A549 (cell line): ENCODE measurements at regions of chr5 and their contacts with region 1.

Region 1: DNA sequence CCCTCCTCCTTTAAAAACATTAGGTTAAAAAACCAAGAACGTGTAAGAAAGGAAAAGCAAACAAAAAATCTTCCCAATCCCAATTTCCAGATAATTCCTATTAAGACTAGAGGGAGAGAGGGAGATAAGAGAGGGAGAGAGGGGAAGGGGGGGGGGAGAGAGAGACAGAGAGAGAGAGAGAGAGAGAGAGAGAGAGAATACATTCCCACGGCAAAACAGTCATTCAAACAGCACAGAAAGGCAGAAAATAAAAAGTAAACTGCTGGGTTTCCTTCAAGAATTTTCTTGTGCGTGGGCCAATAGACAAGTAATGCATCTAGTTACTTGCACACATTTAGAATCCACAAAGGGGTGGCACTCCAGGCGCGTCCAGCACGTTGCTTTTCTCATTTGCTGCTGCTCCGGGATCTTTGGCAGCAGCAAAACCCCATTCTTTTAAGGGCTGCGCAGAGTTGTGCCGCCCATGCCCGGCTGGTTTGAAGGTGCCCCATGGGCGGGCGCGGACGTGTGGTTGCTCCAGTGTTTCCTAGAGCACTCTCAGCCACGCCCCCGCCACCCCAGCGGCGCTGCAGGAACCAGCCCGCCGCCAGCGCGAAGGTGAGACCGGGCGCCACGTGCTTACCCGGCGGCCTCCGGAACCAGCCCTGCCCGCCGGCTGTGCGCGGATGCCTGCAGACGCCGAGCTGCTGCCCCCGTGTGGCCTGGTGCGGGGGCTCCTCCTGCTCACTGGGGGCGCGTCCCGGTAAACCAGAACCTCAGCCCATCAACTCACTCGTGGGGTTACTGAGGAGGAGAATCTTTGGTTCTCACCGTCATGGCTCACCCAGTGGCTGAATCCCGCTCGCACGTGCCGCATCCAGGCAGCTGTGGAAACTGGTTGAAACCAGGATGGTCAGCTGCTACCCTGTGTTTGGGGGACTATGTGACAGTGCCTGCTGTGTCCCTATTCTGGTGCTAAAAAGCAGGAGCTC is 44.6 kb downstream of the STC2 start:
- DNase-seq: peak; percentile 80 to 82
- ATAC-seq: peak; percentile 94 to 98
- H3K4me3 ChIP-seq: peak overlapping the region; percentile 34
- H3K27ac ChIP-seq: peak overlapping the region; percentile 69 to 79
- H3K4me1 ChIP-seq: peaks cover 4% of the 10 kb centered on the region; the same call in 1 of the 3 replicates
- CTCF ChIP-seq: peak; percentile 78
- EP300 ChIP-seq: no peak
- POLR2A ChIP-seq: no peak
- RAD21 ChIP-seq: peak; percentile 69 to 82

Region 2: GRCh38 chr5:173163219-173163618 is 120.4 kb before region 1 on chr5:
- CTCF ChIA-PET with region 1: interaction called, 18 read pairs
- POLR2A ChIA-PET with region 1: no interaction called
- DNase-seq: no peak
- ATAC-seq: peak; percentile 40 to 43; a peak in 2 of 6 replicates
- H3K4me3 ChIP-seq: no peak overlapping the region
- H3K27ac ChIP-seq: no peak overlapping the region
- H3K4me1 ChIP-seq: no peaks in the 10 kb centered on the region
- CTCF ChIP-seq: no peak
- EP300 ChIP-seq: no peak
- POLR2A ChIP-seq: no peak
- RAD21 ChIP-seq: no peak

Region 3: DNA sequence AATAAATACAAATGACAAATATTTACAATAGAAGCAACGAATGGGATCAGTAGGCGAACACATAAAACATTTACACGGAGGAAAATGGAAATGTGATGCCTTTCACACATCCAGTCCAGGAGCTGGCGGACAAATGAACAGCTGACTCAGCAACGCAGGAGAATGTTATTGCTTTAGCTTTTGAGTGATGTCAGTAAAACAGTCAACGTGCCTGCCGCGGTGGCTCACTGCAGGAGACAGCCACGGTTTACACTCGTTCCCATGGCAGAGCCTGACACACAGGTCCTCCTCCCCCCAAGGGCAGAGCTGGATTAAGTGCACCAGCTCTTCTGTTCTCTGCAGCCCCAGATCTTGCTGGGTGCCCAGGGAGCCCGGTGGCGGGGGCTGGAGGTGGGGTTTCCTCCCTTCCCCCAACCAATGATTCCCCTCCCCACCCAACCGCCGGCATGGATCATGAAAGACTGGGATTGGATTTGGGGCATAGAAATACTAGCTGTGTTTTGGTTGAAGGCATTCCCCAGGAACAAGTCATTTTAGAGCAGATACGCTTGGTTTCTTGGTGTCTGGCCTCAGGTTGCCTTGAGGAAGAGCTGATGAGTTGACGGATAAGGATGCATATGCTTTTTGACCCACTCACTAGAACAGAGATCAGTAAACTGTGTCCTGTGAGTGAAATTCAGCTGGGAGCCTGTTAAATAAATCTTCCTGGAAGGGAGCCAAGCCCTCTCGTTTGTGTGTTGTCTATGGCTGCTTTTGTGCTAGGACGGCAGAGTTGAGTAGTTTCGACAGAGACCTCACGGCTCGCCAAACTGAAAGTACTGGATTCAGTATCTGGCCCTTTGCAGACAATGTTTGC is 32.1 kb after region 1 on chr5:
- CTCF ChIA-PET with region 1: no interaction called
- POLR2A ChIA-PET with region 1: no interaction called
- DNase-seq: no peak
- ATAC-seq: no peak
- H3K4me3 ChIP-seq: no peak overlapping the region
- H3K27ac ChIP-seq: no peak overlapping the region
- H3K4me1 ChIP-seq: no peaks in the 10 kb centered on the region
- CTCF ChIP-seq: no peak
- EP300 ChIP-seq: no peak
- POLR2A ChIP-seq: no peak
- RAD21 ChIP-seq: no peak